PC-3 (cell line): ENCODE measurements at regions of chr1 and their contacts with region 1.

Region 1: GRCh38 chr1:184563308-184563707 is 176.5 kb downstream of the C1orf21 start:
- DNase-seq: peak; percentile 47
- ATAC-seq: no peak
- H3K4me3 ChIP-seq: no peak overlapping the region
- H3K27ac ChIP-seq: no peak overlapping the region
- H3K4me1 ChIP-seq: no peaks in the 10 kb centered on the region
- H3K27me3 ChIP-seq: no peaks in the 10 kb centered on the region
- CTCF ChIP-seq: peak; percentile 68

Region 2: DNA sequence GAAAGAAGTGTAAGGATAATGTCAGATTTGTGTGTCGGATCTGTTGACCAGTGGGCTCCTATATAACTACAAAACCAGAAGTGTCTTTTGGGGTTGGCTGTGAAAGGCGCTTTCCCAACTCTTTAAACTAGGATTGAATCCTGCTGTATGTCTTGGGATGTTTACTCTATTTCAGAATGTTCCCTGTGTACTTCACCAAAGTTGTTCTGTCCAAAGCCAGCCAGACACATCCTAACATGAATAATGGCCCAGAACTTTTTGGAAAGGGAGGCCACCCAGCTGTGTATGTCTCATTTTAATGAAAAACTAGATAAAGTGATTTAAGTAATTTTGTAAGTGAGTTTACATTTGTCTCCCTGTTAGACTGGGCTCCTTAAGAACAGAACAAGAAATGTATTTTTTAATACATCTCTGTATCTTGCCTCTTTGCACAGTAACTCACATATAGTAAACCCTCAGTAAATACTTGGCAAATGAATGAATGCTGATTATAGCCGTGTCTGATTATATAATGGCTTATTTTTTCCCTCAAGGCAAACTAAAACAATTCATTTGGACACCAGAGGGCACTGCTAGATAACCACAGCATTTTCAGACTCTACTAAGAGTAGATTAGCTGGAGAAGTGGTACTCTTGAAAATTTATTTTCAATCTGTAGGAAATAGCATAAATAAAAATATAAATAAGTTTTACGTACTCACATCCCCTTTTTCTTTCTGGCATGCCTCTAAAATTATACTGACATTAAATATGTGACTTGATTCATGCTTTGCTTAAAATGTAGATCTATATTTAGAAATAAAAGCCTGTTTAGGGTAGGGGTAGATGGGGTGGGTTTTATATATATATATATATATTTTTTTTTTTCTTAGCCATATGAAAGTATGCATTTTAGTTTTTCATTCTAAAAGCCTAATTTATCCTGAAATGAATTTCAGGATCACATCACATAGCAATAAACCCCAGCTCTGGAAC is 488.0 kb before region 1 on chr1:
- CTCF ChIA-PET with region 1: no interaction called
- POLR2A ChIA-PET with region 1: no interaction called
- intact Hi-C with region 1: loop called (anchors 10 kb)
- DNase-seq: peak; percentile 70
- ATAC-seq: peak; percentile 67
- H3K4me3 ChIP-seq: no peak overlapping the region
- H3K27ac ChIP-seq: no peak overlapping the region
- H3K4me1 ChIP-seq: no peaks in the 10 kb centered on the region
- H3K27me3 ChIP-seq: no peaks in the 10 kb centered on the region
- CTCF ChIP-seq: peak; percentile 70

Region 3: DNA sequence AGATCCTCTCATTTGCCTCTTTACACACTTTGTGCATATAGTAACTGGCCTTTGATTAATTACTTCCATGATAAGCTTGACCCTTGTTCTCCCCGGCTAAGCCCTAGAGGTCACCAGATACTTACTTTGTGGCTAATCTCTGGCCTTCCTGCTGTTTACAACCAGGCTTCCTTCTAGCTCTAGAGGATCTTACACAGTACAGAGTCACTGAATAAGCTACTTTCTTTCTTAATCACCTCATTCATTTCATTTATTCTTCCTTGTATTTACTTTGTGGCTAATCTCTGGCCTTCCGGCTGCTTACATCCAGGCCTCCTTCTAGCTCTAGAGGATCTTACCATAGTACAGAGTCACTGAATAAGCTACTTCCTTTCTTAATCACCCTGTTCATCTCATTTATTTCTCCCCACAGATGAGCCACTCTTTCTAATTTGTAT is 320.8 kb before region 1 on chr1:
- CTCF ChIA-PET with region 1: no interaction called
- POLR2A ChIA-PET with region 1: no interaction called
- intact Hi-C with region 1: loop called (anchors 10 kb)
- DNase-seq: peak; percentile 62
- ATAC-seq: peak; percentile 96
- H3K4me3 ChIP-seq: no peak overlapping the region
- H3K27ac ChIP-seq: peak overlapping the region; percentile 27
- H3K4me1 ChIP-seq: peaks cover 14% of the 10 kb centered on the region
- H3K27me3 ChIP-seq: no peaks in the 10 kb centered on the region
- CTCF ChIP-seq: 0 out of 2 replicates have a peak, but pooled peaks have one; percentile 22

Region 4: GRCh38 chr1:184386312-184387068 is 176.8 kb before region 1 on chr1 and contains the start of gene C1orf21:
- CTCF ChIA-PET with region 1: no interaction called
- POLR2A ChIA-PET with region 1: interaction called, 3 read pairs
- intact Hi-C with region 1: loop called (anchors 5 kb)
- DNase-seq: peak; percentile 73
- ATAC-seq: peak; percentile 78
- H3K4me3 ChIP-seq: peak within 1 kb of the TSS; percentile 90
- H3K27ac ChIP-seq: no peak within 1 kb of the TSS
- H3K4me1 ChIP-seq: peaks cover 10% of the 10 kb centered on the region; the same call in 1 of the 2 replicates
- H3K27me3 ChIP-seq: no peaks in the 10 kb centered on the region
- CTCF ChIP-seq: no peak
- total RNA-seq, gene C1orf21: 1.3 and 7.3 TPM in 2 replicates